ENCODE measurements at regions of chr12 and their contacts with region 1.

Region 1: DNA sequence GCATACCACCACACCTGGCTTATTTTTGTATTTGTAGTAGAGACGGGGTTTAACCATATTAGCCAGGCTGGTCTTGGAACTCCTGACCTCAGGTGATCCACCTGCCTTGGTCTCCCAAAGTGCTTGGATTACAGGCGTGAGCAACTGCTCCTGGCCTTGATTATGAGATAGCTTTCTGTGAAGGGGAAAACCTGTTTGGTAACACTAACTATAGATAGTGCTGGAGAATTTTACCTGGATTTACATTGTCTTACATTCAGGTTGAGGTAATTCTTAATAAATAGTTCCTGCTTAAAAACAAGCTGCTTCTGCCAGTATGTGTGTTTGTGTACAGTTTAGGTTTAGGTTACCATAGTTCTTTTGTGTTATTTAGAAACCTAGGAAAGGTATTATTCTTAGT is 77.1 kb downstream of the MON2 start:
- DNase-seq: no peak
- H3K4me3 ChIP-seq: no peak overlapping the region
- H3K27ac ChIP-seq: no peak overlapping the region
- H3K4me1 ChIP-seq: no peaks in the 10 kb centered on the region
- H3K27me3 ChIP-seq: no peaks in the 10 kb centered on the region
- CTCF ChIP-seq: no peak
- POLR2A ChIP-seq: no peak

Region 2: DNA sequence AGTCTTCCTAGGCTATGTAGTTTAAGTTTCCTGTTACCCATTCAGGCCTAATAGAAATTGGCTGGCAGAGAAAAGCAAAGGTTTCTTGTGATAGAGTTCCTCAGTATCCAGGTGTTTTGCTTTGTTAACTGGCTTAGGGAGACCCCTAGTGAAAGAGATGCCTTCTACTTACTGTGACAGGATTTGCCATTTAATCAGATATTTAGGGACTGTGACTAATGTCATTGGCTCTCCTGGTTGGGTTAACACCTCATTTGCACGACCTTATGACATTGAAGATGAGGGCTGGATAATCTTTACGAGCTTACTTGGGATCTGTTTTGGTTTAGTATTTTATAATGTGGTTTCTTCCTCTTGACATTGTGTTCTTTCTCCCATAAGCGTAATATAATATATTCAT is 71.3 kb before region 1 on chr12:
- CTCF ChIA-PET with region 1: no interaction called
- POLR2A ChIA-PET with region 1: no interaction called
- dilution Hi-C with region 1: no loop called
- intact Hi-C with region 1: loop called (anchors 5 kb)
- DNase-seq: no peak
- H3K4me3 ChIP-seq: no peak overlapping the region
- H3K27ac ChIP-seq: no peak overlapping the region
- H3K4me1 ChIP-seq: peaks cover 8% of the 10 kb centered on the region
- H3K27me3 ChIP-seq: no peaks in the 10 kb centered on the region
- CTCF ChIP-seq: no peak
- POLR2A ChIP-seq: no peak

Measured in endothelial cell of umbilical vein (primary cell).